WTC11 (cell line): ENCODE measurements at regions of chr2 and their contacts with region 1.

Region 1: DNA sequence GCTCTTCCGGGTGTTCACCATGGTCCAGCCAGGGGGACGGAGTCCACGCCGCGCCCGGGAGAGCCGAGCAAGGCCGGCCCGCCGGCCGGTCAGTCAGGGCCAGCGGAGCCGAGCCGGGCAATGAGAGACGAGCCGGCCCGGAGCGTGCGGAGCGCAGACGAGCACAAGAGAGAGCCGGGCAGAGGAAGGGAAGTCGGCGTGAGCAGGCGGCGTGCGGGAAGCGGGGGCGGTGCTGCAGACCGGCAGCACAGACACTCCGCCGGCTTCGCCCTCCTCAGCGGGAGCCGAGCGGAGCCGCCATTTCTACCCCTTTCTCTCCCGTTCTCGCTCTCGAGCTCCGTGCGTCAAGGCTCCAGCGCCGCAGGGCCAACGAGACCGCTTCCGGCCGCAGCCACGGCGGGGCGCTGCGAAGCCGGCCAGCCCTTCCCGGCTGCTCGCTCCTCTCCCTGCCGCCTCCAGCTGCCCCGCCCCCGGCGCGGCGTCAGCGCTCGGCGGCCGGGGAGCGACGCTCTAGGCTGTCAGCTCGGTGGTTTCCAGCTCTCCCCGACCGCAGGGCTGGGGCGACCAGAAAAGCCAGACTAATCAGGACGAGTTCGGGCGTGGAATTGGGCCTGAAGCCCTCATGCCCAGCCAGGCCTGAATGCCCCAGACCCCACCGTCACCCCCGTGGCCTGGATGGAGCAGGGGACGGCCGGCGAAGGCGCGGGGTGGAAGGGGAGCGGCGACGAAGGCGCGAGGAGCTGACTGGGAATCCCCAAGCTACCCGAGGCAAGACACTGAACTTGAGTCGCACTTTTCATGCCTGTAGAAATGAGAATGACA is at the start of gene ATAD2B:
- DNase-seq: peak; percentile 95
- ATAC-seq: peak; percentile 94
- H3K4me3 Mint-ChIP-seq: peak within 1 kb of the TSS; percentile 96
- H3K27ac Mint-ChIP-seq: peak within 1 kb of the TSS; percentile 99
- H3K4me1 Mint-ChIP-seq: peaks cover 21% of the 10 kb centered on the region
- H3K27me3 Mint-ChIP-seq: no peaks in the 10 kb centered on the region
- CTCF ChIP-seq: peak; percentile 52; the same call in 1 of the 2 replicates
- total RNA-seq, gene ATAD2B: 18.3 to 21.5 TPM (median 18.4 TPM) in 3 replicates

Region 2: DNA sequence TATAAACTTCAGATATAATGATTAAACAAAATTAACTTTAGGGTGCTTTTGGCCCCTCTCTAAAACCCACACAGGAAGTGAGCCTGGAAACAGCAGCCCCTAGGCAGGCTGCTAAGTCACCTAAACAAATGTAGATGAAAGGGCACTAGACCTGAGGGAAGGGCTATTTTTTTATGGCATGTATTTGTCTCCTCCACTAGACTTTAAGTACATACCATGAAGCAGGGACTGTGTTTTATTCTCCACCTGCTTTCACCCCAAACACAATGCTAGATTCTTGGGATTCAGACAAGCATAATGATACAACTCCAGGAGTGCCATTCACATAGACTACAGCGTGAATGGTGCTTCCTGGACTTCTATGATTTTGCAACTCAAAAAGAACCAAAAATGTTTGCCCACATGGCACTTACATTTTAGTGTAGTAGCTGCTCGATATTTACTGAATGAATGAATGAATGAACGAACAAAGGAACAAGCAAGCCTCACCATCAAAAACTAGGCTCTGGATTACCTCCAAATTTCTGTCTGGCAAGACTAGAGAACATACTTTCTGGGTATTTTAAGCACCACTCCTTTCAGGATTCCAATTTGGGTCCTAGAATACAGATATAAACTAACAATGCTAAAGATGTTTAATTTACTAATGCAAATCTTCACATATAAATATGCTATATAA is 10.1 kb before region 1 on chr2:
- CTCF ChIA-PET with region 1: interaction called, 11 read pairs
- POLR2A ChIA-PET with region 1: interaction called, 7 read pairs
- DNase-seq: no peak
- ATAC-seq: peak; percentile 73
- H3K4me3 Mint-ChIP-seq: no peak overlapping the region
- H3K27ac Mint-ChIP-seq: peak overlapping the region; percentile 80
- H3K4me1 Mint-ChIP-seq: peaks cover 22% of the 10 kb centered on the region
- H3K27me3 Mint-ChIP-seq: no peaks in the 10 kb centered on the region
- CTCF ChIP-seq: no peak

Region 3: DNA sequence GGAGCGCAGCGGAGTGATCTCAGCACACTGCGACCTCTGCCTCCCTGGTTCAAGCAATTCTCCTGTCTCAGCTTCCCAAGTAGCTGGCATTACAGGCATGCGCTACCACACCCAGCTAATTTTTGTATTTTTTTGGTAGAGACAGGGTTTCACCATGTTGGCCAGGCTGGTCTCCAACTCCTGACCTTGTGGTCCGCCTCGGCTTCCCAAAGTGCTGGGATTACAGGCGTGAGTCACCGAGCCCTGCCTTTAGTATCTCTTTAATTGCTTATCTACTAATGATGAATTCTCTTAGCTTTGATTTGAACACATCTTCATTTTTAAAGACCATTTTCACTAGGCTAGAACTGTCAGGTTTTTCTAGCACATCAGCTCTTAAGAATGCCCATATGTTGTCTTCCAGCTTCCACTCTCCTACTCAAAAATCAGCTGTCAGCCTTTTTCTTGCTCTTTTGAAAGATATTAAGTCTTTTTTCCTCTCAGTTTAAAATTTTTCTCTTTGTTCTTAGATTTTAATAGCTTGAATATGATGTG is 66.8 kb after region 1 on chr2:
- CTCF ChIA-PET with region 1: interaction called, 10 read pairs
- POLR2A ChIA-PET with region 1: no interaction called
- DNase-seq: no peak
- ATAC-seq: no peak
- H3K4me3 Mint-ChIP-seq: no peak overlapping the region
- H3K27ac Mint-ChIP-seq: peak overlapping the region; percentile 38; the same call in 1 of the 2 replicates
- H3K4me1 Mint-ChIP-seq: peaks cover 30% of the 10 kb centered on the region
- H3K27me3 Mint-ChIP-seq: no peaks in the 10 kb centered on the region
- CTCF ChIP-seq: no peak

Region 4: GRCh38 chr2:24024018-24024417 is 97.1 kb after region 1 on chr2:
- CTCF ChIA-PET with region 1: interaction called, 11 read pairs
- POLR2A ChIA-PET with region 1: interaction called, 8 read pairs
- DNase-seq: peak; percentile 43
- ATAC-seq: peak; percentile 17
- H3K4me3 Mint-ChIP-seq: no peak overlapping the region
- H3K27ac Mint-ChIP-seq: peak overlapping the region; percentile 96
- H3K4me1 Mint-ChIP-seq: peaks cover 59% of the 10 kb centered on the region
- H3K27me3 Mint-ChIP-seq: no peaks in the 10 kb centered on the region
- CTCF ChIP-seq: no peak

Region 5: DNA sequence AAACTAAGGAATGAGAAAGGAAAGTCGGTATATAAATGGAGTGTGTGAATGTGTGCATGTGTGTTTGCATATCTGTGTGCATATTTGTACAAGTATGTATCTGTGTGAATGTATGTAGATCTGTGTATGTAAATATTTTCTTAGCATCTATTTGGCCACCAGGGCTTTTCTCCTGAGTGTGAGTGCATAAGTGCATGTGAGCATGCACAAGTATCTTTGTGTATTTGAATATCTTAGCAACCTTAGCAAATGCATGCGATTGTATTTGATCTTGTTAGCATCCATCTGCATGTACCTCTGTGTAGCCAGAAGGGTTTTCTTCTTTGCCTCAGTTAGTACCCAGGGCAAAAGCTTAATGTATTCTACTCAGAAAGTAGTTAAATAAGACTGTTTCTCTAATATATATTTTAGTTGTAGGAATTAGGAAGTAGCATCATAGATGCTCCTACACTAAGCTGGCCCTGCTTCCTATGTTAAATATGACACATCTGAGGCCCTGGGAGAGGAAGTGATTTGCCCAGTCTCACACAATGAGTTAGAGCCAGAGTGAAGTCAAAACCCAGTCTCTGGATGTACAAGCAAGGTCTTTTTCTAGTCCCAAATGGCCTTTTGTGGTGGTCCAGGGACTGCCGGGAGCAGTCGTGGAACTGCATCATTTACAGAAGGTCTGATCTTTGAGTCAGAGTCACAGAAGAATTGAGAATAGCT is 131.8 kb after region 1 on chr2:
- CTCF ChIA-PET with region 1: interaction called, 38 read pairs
- POLR2A ChIA-PET with region 1: no interaction called
- DNase-seq: no peak
- ATAC-seq: no peak
- H3K4me3 Mint-ChIP-seq: no peak overlapping the region
- H3K27ac Mint-ChIP-seq: no peak overlapping the region; the same call in 1 of the 2 replicates
- H3K4me1 Mint-ChIP-seq: no peaks in the 10 kb centered on the region; the same call in 1 of the 2 replicates
- H3K27me3 Mint-ChIP-seq: no peaks in the 10 kb centered on the region
- CTCF ChIP-seq: no peak

Region 6: DNA sequence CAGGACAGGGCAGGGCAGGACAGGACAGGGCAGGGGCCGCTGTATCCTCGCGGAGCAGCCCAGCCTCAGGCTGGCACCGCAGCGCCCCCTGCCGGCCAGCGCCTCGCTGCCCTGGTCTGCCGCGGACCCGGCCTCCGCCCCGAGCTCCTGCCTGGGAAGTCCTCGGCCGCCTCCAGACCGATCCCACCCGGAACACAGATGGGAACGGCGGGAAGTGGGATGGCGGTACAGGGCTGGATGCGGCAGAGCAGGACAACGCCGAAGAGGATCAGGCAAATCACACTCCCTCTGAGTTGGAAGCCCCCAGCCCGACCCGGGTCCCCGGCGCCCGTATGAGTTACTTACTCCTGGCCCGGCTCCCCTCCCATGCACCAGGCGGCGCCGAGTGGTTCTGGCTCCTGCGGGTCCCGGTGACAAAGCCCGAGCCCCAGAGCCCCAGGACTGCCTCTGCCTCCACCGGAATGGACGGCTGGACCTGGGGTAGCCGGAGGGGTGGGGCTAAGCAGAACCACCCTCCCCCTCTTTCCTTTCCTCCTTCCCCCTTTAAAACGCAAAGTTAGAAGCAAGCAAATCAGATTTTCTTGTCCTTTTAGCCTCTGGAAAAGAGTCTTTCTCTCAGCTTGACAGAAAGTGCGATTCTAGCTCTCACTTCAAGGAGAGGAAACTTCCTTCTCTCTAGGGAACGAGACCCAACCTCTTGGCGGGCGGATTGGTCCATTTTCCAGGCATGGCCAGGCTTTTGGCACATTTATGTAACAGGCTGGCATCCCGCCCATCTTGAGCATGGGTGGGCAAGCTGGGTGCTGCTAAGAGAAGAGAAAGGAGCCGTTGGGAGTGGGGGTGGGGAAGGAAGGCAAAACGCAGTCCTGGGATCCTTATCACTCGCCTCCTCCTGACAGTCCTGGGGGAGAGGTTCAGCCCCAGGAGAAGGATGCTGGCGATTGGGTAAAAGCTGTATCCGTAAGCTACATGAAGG is 157.7 kb after region 1 on chr2 and contains the start of gene TP53I3:
- CTCF ChIA-PET with region 1: interaction called, 52 read pairs
- POLR2A ChIA-PET with region 1: interaction called, 30 read pairs
- DNase-seq: peak; percentile 94
- ATAC-seq: peak; percentile 85
- H3K4me3 Mint-ChIP-seq: peak within 1 kb of the TSS; percentile 89
- H3K27ac Mint-ChIP-seq: peak within 1 kb of the TSS; percentile 98
- H3K4me1 Mint-ChIP-seq: peaks cover 20% of the 10 kb centered on the region
- H3K27me3 Mint-ChIP-seq: no peaks in the 10 kb centered on the region
- CTCF ChIP-seq: peak; percentile 96
- total RNA-seq, gene TP53I3: 29.7 to 33.1 TPM (median 32.9 TPM) in 3 replicates